Ascending aorta (tissue), 2 donors: ENCODE measurements at regions of chr22 and their contacts with region 1.

Region 1: GRCh38 chr22:41204992-41205900 is at the start of gene L3MBTL2:
- DNase-seq: peak; percentile 95 to 99
- H3K4me3 ChIP-seq: peak within 1 kb of the TSS; percentile 63 to 89
- H3K27ac ChIP-seq: peak within 1 kb of the TSS; percentile 72 to 73
- H3K4me1 ChIP-seq: peaks cover 4 to 5% of the 10 kb centered on the region in 2 donors
- H3K27me3 ChIP-seq: no peaks in the 10 kb centered on the region
- CTCF ChIP-seq: no peak
- total RNA-seq, gene L3MBTL2: 33.3 TPM

Region 2: GRCh38 chr22:41091132-41092022 is 113.9 kb before region 1 on chr22:
- intact Hi-C with region 1: loop called (anchors 2 kb)
- DNase-seq: peak; percentile 96 to 100
- H3K4me3 ChIP-seq: peak overlapping the region; percentile 84 to 94
- H3K27ac ChIP-seq: peak overlapping the region; percentile 99 to 100
- H3K4me1 ChIP-seq: peaks cover 0 to 4% of the 10 kb centered on the region in 2 donors
- H3K27me3 ChIP-seq: no peaks in the 10 kb centered on the region
- CTCF ChIP-seq: no peak

Region 3: GRCh38 chr22:41381329-41382097 is 176.3 kb after region 1 on chr22 and contains the start of gene TEF:
- intact Hi-C with region 1: loop called (anchors 1 kb)
- DNase-seq: peak; percentile 97 to 99
- H3K4me3 ChIP-seq: peak within 1 kb of the TSS; percentile 79 to 87
- H3K27ac ChIP-seq: peak within 1 kb of the TSS; percentile 93 to 96
- H3K4me1 ChIP-seq: peaks cover 3 to 19% of the 10 kb centered on the region in 2 donors
- H3K27me3 ChIP-seq: no peaks in the 10 kb centered on the region
- CTCF ChIP-seq: no peak
- total RNA-seq, gene TEF: 20.2 TPM